ENCODE measurements at regions of chr7 and their contacts with region 1.

Region 1: DNA sequence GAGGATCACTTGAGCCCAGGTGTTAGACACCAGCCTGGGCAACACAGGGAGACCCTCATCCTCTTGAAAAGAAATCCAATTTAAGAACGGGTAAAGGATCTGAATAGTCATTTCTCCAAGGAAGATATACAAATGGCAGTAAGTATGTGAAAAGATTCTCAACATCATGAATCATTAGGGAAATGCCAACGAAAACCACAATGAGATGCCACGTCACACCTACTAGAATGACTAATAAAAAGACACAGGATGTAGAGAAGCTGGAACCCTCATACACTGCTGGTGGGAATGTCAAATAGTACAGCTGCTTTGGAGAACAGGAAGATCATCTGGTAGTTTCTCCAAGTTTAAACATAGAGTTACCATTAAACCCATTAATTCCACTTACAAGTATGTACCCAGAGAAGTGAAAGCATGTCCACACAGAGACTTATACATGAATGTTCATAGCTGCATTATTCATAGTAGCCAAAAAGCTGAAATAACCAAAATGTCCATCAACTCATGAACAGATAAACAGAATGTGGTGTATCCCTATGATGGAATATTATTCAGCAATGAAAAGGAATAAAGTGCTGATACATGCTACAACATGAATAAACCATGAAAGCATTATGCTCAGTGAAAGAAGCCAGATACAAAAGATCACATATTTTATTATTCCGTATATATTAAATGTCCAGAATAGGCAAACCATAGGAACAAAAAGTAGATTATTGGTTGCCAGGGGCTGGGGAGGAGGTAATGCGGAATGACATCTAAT is 13.1 kb upstream of the ZMIZ2 start:
- DNase-seq: peak; percentile 58 to 99
- H3K4me3 ChIP-seq: peak overlapping the region; percentile 22; the same call in 1 of the 2 replicates
- H3K27ac ChIP-seq: peak overlapping the region; percentile 94
- H3K4me1 ChIP-seq: peaks cover 55% of the 10 kb centered on the region
- H3K27me3 ChIP-seq: no peaks in the 10 kb centered on the region
- CTCF ChIP-seq: no peak

Region 2: DNA sequence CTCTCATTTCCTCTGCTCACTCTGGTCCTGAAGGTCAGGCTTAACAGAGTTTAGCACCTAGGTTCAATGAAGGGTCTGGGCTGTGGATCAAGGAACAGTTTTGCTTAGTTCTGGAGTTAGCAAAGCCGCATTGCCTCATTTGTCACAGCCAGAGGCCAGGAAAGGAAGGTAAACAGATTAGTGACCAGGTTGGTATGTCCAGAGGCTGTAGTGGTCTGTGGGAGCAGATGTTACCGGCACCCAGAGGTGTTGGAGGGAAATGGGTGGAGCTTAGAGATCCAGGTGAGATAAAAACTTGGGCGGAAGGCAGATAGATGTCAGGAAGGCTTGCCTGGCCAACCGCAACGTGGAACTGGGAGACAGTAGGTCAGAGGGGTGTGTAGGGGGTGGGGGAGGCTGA is 23.6 kb before region 1 on chr7:
- CTCF ChIA-PET with region 1: interaction called, 4 read pairs
- POLR2A ChIA-PET with region 1: interaction called, 3 read pairs
- intact Hi-C with region 1: loop called (anchors 2 kb)
- DNase-seq: peak; percentile 87 to 97
- H3K4me3 ChIP-seq: no peak overlapping the region
- H3K27ac ChIP-seq: peak overlapping the region; percentile 69
- H3K4me1 ChIP-seq: peaks cover 52% of the 10 kb centered on the region
- H3K27me3 ChIP-seq: no peaks in the 10 kb centered on the region
- CTCF ChIP-seq: no peak

Measured in PC-9 (cell line).